A549 (cell line): ENCODE measurements at regions of chr20 and their contacts with region 1.

Region 1: DNA sequence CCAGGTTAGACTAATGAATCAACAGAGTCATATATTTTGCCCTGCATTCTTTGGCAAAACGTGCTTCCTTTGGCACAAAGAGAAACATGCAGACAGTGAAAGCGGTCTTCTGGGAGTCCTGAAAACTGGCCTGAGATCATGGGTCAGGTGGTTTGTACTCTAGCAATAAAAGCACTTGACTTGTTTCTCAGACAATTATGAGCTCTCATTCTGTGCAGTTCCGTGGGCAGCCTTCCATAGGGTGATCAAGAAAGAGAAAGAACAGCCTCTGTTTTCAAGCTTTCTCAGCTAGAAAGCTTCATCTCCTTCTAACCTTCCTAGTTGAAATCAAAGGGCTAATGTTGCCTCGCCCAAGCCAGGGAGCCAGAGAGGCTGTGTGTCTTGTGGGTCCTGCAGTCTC is 62.7 kb upstream of the ISM1 start:
- DNase-seq: no peak
- ATAC-seq: no peak
- H3K4me3 ChIP-seq: no peak overlapping the region
- H3K27ac ChIP-seq: no peak overlapping the region
- H3K4me1 ChIP-seq: no peaks in the 10 kb centered on the region
- CTCF ChIP-seq: no peak
- EP300 ChIP-seq: no peak
- POLR2A ChIP-seq: no peak
- RAD21 ChIP-seq: no peak

Region 2: DNA sequence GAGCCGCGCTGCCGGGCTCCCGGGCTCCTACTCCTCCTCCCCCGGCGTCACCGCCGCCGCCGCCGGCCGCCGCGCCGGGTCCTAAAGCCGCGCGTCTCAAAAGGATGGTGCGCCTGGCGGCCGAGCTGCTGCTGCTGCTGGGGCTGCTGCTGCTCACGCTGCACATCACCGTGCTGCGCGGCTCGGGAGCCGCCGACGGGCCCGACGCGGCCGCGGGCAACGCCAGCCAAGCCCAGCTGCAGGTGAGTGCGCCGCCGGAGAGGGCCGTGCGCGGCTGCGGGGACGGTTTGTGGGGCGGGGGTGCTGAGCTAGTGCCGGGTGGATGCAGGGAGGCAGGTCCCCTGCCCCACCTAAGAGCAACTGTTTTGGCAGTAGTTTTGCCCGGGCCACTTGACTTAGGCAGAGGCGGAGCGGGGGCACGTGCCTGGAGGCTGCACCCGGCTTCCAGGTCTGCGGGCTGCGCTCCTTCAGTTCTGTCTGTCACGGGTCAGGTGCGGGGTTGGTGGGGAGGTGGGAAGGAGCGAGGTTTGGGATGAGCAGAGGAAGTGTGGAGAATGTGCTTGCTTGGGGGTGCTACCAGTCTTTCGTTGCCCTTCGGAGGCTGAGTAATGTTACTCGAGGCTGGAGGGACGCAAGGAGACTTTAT is 63.4 kb after region 1 on chr20:
- CTCF ChIA-PET with region 1: no interaction called
- POLR2A ChIA-PET with region 1: no interaction called
- DNase-seq: peak; percentile 68 to 73
- ATAC-seq: peak; percentile 83 to 88
- H3K4me3 ChIP-seq: peak overlapping the region; percentile 86
- H3K27ac ChIP-seq: peak overlapping the region; percentile 65 to 89; a peak in 5 of 6 replicates
- H3K4me1 ChIP-seq: peaks cover 11% of the 10 kb centered on the region; the same call in 2 of the 3 replicates
- CTCF ChIP-seq: no peak
- EP300 ChIP-seq: no peak
- POLR2A ChIP-seq: no peak
- RAD21 ChIP-seq: no peak; a peak in 2 of 5 replicates

Region 3: DNA sequence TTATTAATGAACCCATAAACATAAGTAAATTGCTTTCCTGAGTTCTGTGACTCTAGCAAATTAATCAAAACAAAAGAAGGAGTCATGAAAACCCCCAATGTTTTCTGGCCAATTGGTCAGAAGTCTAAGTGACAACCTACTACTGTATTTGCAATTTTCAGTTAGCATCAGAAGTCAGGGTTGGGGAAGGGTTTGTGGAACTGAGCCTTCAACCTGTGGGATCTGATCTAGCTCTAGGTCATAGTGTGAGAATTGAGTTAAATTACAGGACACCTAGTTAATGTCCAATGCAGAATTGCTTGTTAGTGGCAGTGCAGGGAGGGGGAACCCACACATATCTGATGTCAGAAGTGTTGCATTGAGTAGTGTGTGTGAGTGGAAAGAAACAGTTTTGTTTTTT is 205.1 kb after region 1 on chr20:
- CTCF ChIA-PET with region 1: no interaction called
- POLR2A ChIA-PET with region 1: interaction called, 10 read pairs
- DNase-seq: no peak
- ATAC-seq: no peak
- H3K4me3 ChIP-seq: no peak overlapping the region
- H3K27ac ChIP-seq: no peak overlapping the region
- H3K4me1 ChIP-seq: no peaks in the 10 kb centered on the region
- CTCF ChIP-seq: no peak
- EP300 ChIP-seq: no peak
- POLR2A ChIP-seq: no peak
- RAD21 ChIP-seq: no peak